ENCODE measurements at regions of chr11 and their contacts with region 1.

Region 1: DNA sequence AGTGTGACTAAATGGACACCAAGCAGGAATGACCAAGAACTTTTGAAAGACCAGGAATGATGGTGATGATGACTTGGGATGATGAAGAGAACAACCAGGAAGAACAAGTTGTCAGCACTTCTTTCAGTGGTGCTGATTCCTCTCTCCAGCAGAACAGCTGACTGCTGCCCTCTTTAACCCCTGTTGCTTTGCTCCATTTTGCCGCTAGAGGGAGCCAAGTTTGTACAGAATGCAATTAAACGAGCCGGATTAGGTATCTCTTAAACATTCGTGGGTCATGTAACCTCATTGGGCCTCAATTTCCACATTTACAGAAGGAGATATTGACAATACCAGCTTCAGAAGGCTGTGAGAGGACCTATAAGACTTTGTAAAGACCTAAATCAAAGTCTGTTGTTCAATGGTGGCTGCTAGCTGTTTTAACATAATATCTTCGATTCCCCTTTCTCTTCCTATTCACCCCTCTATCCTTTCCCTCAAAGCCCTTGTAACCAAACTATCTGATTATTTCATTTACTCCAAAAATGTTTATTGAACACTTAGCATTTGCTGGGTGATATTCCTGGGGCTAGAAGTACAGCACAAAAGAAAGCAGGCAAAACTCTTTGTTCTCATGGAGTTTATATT is 1.9 kb downstream of the OR4S1 start:
- DNase-seq: peak; percentile 83
- H3K4me3 Mint-ChIP-seq: no peak overlapping the region
- H3K27ac Mint-ChIP-seq: no peak overlapping the region
- H3K4me1 Mint-ChIP-seq: no peaks in the 10 kb centered on the region
- H3K27me3 Mint-ChIP-seq: peaks cover 10% of the 10 kb centered on the region

Region 2: GRCh38 chr11:48172818-48173609 is 134.9 kb before region 1 on chr11:
- CTCF ChIA-PET with region 1: interaction called, 12 read pairs
- DNase-seq: peak; percentile 75
- H3K4me3 Mint-ChIP-seq: no peak overlapping the region
- H3K27ac Mint-ChIP-seq: peak overlapping the region; percentile 6
- H3K4me1 Mint-ChIP-seq: peaks cover 43% of the 10 kb centered on the region
- H3K27me3 Mint-ChIP-seq: peaks cover 1% of the 10 kb centered on the region